BJ (cell line): ENCODE measurements at regions of chr5 and their contacts with region 1.

Region 1: GRCh38 chr5:102747386-102748166 is 7.5 kb upstream of the PAM start:
- DNase-seq: no peak
- H3K4me3 ChIP-seq: no peak overlapping the region
- H3K27me3 ChIP-seq: no peaks in the 10 kb centered on the region
- CTCF ChIP-seq: no peak

Region 2: DNA sequence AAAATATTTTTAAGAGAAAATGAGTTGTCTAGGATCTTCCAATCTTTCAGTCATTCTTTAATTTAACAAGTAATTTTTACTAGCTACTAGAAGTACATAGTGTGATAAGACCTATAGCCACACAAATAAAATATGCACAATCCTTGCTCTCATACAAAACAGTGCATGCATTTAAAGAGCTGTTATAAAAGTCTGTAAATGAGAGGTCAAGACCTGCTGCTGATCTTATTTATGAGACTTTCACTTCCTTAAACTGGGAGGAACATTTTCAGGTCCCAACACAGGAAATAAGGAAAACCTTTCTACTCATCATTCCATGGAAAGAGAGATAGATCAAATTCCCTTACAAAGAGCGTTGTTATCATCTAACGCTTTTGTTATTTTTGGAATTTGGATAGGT is 46.7 kb before region 1 on chr5:
- CTCF ChIA-PET with region 1: no interaction called
- POLR2A ChIA-PET with region 1: no interaction called
- DNase-seq: no peak
- H3K4me3 ChIP-seq: no peak overlapping the region
- H3K27me3 ChIP-seq: no peaks in the 10 kb centered on the region
- CTCF ChIP-seq: no peak

Region 3: DNA sequence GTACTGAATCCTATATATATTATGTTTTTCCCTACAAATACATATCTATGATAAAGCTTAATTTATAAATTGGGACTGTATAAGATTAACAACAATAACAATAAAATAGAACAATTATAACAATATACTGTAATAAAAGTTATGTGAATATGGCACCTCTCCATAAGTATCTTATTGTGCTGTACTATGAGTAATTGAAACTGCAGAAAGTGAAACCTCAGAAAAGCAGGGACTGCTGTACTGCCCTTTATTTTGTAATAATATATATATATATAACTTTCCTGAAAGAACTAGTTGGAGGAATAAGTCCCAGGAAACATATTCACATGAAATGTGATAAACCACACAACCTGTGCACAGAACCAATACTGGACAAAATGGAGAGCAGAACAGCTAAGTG is 84.9 kb after region 1 on chr5:
- CTCF ChIA-PET with region 1: no interaction called
- POLR2A ChIA-PET with region 1: interaction called, 12 read pairs
- DNase-seq: no peak
- H3K4me3 ChIP-seq: no peak overlapping the region
- H3K27me3 ChIP-seq: no peaks in the 10 kb centered on the region
- CTCF ChIP-seq: no peak